ENCODE measurements at regions of chr22 and their contacts with region 1.

Region 1: DNA sequence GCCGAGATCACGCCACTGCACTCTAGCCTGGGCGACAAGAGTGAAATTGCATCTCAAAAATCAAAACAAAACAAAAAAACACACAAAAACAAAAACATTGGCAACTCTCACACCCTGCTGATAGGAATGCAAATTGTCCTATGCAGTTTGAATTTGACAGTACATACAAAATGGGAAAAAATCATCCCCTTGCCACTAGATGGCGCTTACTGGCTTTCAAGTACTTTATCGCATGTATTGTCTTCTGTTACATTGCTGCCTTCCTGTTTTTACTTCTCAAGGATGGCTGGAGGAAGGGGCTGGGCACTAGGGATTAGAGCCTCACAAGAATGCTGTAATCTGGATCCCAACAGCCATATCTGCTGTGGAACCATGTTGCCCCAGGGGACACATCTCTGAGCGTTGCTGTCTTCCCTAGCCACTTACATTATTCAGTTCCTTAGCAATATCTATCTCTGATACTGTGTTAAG is 59.4 kb upstream of the A4GALT start:
- DNase-seq: peak; percentile 86
- H3K4me3 ChIP-seq: no peak overlapping the region
- CTCF ChIP-seq: peak; percentile 78

Region 2: DNA sequence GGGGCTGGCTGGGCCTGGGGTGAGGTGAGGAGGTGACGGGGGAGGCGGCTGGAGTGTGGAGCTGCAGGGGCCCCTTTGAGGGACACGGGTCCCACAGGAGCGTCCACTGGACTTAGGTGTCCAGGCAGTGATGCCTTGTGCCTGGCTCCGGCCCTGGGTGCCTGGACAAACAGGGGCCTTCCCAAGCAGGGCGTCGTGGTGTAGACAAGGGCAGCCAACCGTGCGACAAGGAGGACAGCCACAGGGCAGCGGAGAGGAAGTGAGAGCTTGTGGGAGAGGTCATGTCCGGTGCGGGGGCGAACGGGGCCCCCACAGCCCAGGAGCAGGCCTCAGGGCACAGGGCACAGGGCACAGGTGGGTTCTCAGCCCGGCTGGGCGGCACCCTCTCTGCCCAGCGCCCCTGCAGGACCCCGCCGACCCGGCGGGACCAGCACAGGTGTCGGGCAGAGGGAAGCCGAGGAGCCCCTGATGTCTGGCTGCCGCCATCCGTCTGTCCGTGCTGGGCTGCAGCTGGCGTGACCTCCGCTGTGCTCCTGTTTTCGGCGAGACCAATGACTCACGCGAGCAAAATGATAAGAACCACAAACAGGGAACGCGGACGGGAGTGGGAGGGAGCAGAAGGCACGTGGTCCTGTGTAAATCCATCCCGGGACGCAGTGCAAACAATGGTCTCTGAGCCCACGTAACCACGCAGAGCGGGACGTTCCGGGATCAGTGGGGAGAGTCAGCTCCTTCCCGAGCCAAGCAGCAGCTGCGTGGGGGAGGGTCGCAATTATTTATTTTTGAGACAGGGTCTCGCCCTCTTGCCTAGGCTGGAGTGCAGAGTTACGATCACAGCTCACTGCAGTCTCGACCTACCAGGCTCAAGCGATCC is 10.3 kb before region 1 on chr22:
- CTCF ChIA-PET with region 1: interaction called, 12 read pairs
- POLR2A ChIA-PET with region 1: no interaction called
- DNase-seq: peak; percentile 40
- H3K4me3 ChIP-seq: peak overlapping the region; percentile 25
- CTCF ChIP-seq: no peak

Region 3: GRCh38 chr22:42947211-42947990 is 167.3 kb after region 1 on chr22:
- CTCF ChIA-PET with region 1: no interaction called
- POLR2A ChIA-PET with region 1: no interaction called
- DNase-seq: no peak
- H3K4me3 ChIP-seq: no peak overlapping the region
- CTCF ChIP-seq: no peak

Region 4: DNA sequence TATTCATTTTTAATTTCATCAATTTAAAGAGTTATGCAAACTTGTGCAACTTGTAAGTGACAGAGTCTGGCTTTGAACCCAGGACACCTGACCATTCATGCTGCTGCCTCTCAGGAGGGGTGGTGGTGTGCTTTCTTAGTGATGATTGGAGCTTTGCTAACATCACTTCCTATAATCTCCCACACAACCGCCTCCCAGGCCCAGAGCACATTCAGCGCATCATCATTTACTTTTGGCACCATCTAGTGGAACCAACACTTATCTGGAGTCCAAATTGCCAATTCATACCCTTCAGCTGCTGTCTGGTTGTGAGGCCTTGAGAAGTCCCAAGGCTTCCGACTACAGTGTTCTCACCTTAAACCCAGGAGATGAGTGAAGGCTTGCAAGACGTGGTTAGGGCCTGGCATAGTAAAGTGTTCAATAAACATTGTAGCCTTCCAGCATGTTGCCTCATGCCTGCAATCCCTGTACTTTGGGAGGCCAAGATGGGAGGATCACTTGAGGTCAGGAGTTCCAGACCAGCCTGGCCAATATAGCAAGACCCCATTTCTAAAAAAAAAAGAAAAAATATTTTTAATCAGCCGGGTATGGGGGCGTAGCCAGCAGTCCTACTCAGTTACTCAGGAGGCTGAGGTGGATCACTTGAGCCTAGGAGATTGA is 310.2 kb after region 1 on chr22:
- CTCF ChIA-PET with region 1: interaction called, 13 read pairs
- POLR2A ChIA-PET with region 1: no interaction called
- DNase-seq: peak; percentile 50
- H3K4me3 ChIP-seq: no peak overlapping the region
- CTCF ChIP-seq: peak; percentile 64